PC-9 (cell line): ENCODE measurements at regions of chr10 and their contacts with region 1.

Region 1: GRCh38 chr10:84548869-84549268 is 220.5 kb downstream of the CCSER2 start:
- DNase-seq: no peak
- H3K4me3 ChIP-seq: no peak overlapping the region
- H3K27ac ChIP-seq: no peak overlapping the region
- H3K4me1 ChIP-seq: no peaks in the 10 kb centered on the region
- H3K27me3 ChIP-seq: peaks cover 27% of the 10 kb centered on the region
- CTCF ChIP-seq: no peak; the same call in 1 of the 2 replicates

Region 2: GRCh38 chr10:84590327-84591193 is 41.7 kb after region 1 on chr10:
- CTCF ChIA-PET with region 1: no interaction called
- POLR2A ChIA-PET with region 1: no interaction called
- intact Hi-C with region 1: loop called (anchors 5 kb)
- DNase-seq: no peak
- H3K4me3 ChIP-seq: no peak overlapping the region
- H3K27ac ChIP-seq: no peak overlapping the region
- H3K4me1 ChIP-seq: no peaks in the 10 kb centered on the region
- H3K27me3 ChIP-seq: peaks cover 56% of the 10 kb centered on the region
- CTCF ChIP-seq: no peak